IMR-90 (cell line): ENCODE measurements at regions of chr4 and their contacts with region 1.

Region 1: GRCh38 chr4:155735496-155735895 is 23.3 kb upstream of the GUCY1B1 start:
- DNase-seq: peak; percentile 39
- ATAC-seq: no peak
- H3K4me3 ChIP-seq: no peak overlapping the region
- H3K27ac ChIP-seq: no peak overlapping the region
- H3K4me1 ChIP-seq: peaks cover 8% of the 10 kb centered on the region
- H3K27me3 ChIP-seq: no peaks in the 10 kb centered on the region
- CTCF ChIP-seq: no peak
- POLR2A ChIP-seq: no peak
- RAD21 ChIP-seq: no peak

Region 2: GRCh38 chr4:155696226-155696625 is 39.3 kb before region 1 on chr4:
- CTCF ChIA-PET with region 1: no interaction called
- POLR2A ChIA-PET with region 1: no interaction called
- dilution Hi-C with region 1: no loop called
- in situ Hi-C with region 1: no loop called
- intact Hi-C with region 1: loop called (anchors 5 kb)
- DNase-seq: no peak
- ATAC-seq: no peak
- H3K4me3 ChIP-seq: no peak overlapping the region
- H3K27ac ChIP-seq: no peak overlapping the region
- H3K4me1 ChIP-seq: no peaks in the 10 kb centered on the region
- H3K27me3 ChIP-seq: peaks cover 4% of the 10 kb centered on the region; the same call in 1 of the 2 replicates
- CTCF ChIP-seq: no peak
- POLR2A ChIP-seq: no peak
- RAD21 ChIP-seq: no peak

Region 3: GRCh38 chr4:155906554-155907247 is 171.2 kb after region 1 on chr4:
- CTCF ChIA-PET with region 1: no interaction called
- POLR2A ChIA-PET with region 1: no interaction called
- dilution Hi-C with region 1: no loop called
- in situ Hi-C with region 1: no loop called
- intact Hi-C with region 1: no loop called
- DNase-seq: peak; percentile 99
- ATAC-seq: peak; percentile 93
- H3K4me3 ChIP-seq: no peak overlapping the region
- H3K27ac ChIP-seq: no peak overlapping the region; the same call in 1 of the 2 replicates
- H3K4me1 ChIP-seq: peaks cover 2% of the 10 kb centered on the region; the same call in 1 of the 2 replicates
- H3K27me3 ChIP-seq: peaks cover 2% of the 10 kb centered on the region; the same call in 1 of the 2 replicates
- CTCF ChIP-seq: no peak
- POLR2A ChIP-seq: no peak
- RAD21 ChIP-seq: no peak